ENCODE measurements at regions of chr19 and their contacts with region 1.

Region 1: GRCh38 chr19:13731147-13731964 is 33.0 kb upstream of the MRI1 start:
- DNase-seq: peak; percentile 97
- ATAC-seq: peak; percentile 99
- H3K4me3 Mint-ChIP-seq: peak overlapping the region; percentile 86
- H3K27ac Mint-ChIP-seq: peak overlapping the region; percentile 96
- H3K4me1 Mint-ChIP-seq: peaks cover 22% of the 10 kb centered on the region
- H3K27me3 Mint-ChIP-seq: no peaks in the 10 kb centered on the region
- CTCF ChIP-seq: no peak

Region 2: DNA sequence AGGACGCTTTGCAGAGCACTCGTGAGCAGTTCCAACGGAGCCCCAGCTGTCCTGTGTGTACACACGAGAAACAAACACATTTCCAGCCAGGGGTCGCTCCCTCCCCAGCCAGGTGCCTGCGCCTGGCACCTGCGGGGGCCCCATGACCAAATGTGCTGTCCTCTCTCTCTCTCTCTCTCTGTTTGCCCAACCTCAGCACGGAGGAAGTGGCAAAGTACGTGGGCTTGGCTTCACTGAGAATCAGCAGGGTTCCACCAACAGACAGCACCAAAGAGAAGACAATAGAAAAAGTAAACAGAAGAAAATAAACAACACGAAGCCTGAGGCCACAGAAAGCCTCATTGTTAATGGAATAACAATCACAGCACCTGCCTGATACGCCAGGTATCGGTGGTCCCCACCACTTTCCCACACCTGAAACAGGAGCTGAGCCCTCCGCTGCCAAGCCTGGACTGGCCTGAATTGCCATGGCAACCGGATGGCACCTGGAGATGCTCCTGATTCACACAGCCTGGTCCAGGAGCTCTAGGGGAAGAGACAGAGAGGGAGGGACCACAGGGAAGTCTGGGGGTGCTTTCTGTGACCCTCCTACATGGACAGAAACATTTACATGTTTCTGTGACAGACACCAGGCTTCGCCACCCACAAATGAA is 121.2 kb before region 1 on chr19:
- CTCF ChIA-PET with region 1: no interaction called
- POLR2A ChIA-PET with region 1: no interaction called
- intact Hi-C with region 1: loop called (anchors 10 kb)
- DNase-seq: peak; percentile 39
- ATAC-seq: peak; percentile 42
- H3K4me3 Mint-ChIP-seq: no peak overlapping the region
- H3K27ac Mint-ChIP-seq: no peak overlapping the region
- H3K4me1 Mint-ChIP-seq: peaks cover 8% of the 10 kb centered on the region
- H3K27me3 Mint-ChIP-seq: peaks cover 7% of the 10 kb centered on the region
- CTCF ChIP-seq: no peak

Region 3: GRCh38 chr19:13748169-13748828 is 16.9 kb after region 1 on chr19:
- CTCF ChIA-PET with region 1: interaction called, 3 read pairs
- POLR2A ChIA-PET with region 1: interaction called, 15 read pairs
- intact Hi-C with region 1: no loop called
- DNase-seq: peak; percentile 42
- ATAC-seq: no peak
- H3K4me3 Mint-ChIP-seq: peak overlapping the region; percentile 93
- H3K27ac Mint-ChIP-seq: peak overlapping the region; percentile 90
- H3K4me1 Mint-ChIP-seq: peaks cover 22% of the 10 kb centered on the region
- H3K27me3 Mint-ChIP-seq: no peaks in the 10 kb centered on the region
- CTCF ChIP-seq: no peak